ENCODE measurements at regions of chr3 and their contacts with region 1.

Region 1: DNA sequence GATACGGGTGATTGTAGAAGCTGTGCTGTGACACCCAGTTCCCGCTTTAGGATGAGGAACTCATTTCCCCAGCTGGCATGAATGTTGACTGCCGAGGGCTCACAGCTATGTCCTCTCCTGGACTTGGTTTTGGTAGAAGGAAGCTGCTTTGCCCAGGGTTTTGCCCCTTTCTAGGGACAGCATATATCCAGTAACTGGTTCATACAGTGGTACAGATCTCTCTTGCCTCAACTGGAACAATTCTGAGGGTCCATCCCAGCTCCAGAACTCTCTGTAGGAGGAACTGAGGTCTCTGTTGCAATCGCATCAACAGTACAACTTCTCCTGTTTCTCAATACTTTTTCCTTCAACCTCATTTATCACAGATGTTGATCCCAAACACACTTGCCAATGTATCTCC is 54.5 kb upstream of the FNDC3B start:
- DNase-seq: no peak
- ATAC-seq: no peak
- H3K4me3 ChIP-seq: no peak overlapping the region
- H3K27ac ChIP-seq: no peak overlapping the region
- H3K4me1 ChIP-seq: no peaks in the 10 kb centered on the region
- H3K27me3 ChIP-seq: no peaks in the 10 kb centered on the region
- CTCF ChIP-seq: no peak

Region 2: GRCh38 chr3:171874251-171874679 is 110.6 kb before region 1 on chr3:
- CTCF ChIA-PET with region 1: no interaction called
- POLR2A ChIA-PET with region 1: no interaction called
- in situ Hi-C with region 1: no loop called
- intact Hi-C with region 1: no loop called
- DNase-seq: no peak
- ATAC-seq: no peak
- H3K4me3 ChIP-seq: no peak overlapping the region
- H3K27ac ChIP-seq: no peak overlapping the region
- H3K4me1 ChIP-seq: peaks cover 2% of the 10 kb centered on the region; the same call in 1 of the 2 replicates
- H3K27me3 ChIP-seq: peaks cover 4% of the 10 kb centered on the region; the same call in 1 of the 2 replicates
- CTCF ChIP-seq: no peak

Region 3: DNA sequence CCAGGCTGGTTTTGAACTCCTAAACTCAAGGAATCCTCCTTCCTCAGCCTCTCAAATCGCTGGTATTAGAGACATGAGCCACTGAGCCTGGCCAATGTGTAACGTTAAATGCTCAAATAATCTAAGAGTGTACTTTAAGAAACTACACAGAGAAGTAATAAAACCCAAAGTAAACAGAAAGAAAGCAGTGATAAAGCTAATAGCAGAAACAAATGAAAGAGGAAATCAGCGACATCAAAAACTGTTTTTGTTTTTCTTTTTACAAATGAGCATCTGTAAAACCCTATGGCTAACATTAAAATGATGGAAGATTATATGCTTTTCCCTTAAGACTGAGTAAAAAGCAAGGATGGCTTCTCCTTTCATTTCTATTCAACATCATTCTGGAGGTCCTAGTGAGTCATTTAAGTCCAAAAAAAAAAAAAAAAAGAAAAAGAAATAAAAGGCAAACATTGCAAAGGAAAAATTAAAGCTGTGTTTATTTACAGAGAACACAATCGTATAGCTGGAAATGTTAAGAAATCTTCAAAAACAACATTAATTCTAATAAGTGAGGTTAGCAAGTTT is 17.7 kb after region 1 on chr3:
- CTCF ChIA-PET with region 1: no interaction called
- POLR2A ChIA-PET with region 1: interaction called, 17 read pairs
- in situ Hi-C with region 1: no loop called
- intact Hi-C with region 1: no loop called
- DNase-seq: no peak
- ATAC-seq: no peak
- H3K4me3 ChIP-seq: no peak overlapping the region
- H3K27ac ChIP-seq: no peak overlapping the region
- H3K4me1 ChIP-seq: no peaks in the 10 kb centered on the region
- H3K27me3 ChIP-seq: no peaks in the 10 kb centered on the region
- CTCF ChIP-seq: no peak

Region 4: DNA sequence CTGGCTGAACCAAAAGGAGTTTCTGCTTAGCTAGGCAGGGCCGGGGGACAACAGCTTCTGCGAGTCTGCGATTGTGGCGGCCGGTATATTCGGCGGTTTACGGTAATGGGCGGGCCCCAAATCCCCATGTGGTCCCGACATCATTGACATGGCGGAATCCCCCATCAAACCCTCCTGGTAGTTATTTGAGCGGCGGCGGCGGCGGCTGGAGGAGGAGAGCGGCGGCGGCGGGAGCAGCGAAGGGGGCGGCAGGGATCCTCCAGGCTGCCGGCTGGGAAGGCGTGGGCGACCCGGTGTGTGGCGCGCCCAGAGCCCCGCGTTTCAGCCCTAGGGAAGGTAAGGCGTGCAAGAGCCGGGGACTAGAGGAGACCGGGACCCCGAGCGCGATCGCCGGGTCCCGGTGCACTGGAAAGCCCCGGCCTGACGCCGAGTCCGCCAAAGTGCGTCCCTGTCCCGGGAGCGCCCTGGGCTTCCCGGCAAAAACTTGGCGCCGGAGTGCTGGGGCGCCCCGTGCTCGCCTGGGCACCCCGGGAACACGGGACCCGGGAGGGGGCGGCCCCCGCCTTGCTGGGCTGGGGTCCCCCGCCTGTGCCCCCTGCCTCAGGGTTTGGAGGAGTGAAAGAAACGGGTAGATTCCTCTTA is 54.7 kb after region 1 on chr3 and contains the start of gene FNDC3B:
- CTCF ChIA-PET with region 1: no interaction called
- POLR2A ChIA-PET with region 1: interaction called, 12 read pairs
- in situ Hi-C with region 1: no loop called
- intact Hi-C with region 1: no loop called
- DNase-seq: peak; percentile 72
- ATAC-seq: peak; percentile 82
- H3K4me3 ChIP-seq: peak within 1 kb of the TSS; percentile 90 to 91
- H3K27ac ChIP-seq: peak within 1 kb of the TSS; percentile 88
- H3K4me1 ChIP-seq: peaks cover 25% of the 10 kb centered on the region
- H3K27me3 ChIP-seq: no peaks in the 10 kb centered on the region
- CTCF ChIP-seq: no peak
- total RNA-seq, gene FNDC3B: 173 TPM